Endothelial cell of umbilical vein (primary cell): ENCODE measurements at regions of chr16 and their contacts with region 1.

Region 1: GRCh38 chr16:58121132-58121531 is 8.0 kb downstream of the CFAP20 start:
- DNase-seq: peak; percentile 56
- H3K4me3 ChIP-seq: no peak overlapping the region
- H3K27ac ChIP-seq: peak overlapping the region; percentile 39
- H3K4me1 ChIP-seq: peaks cover 28% of the 10 kb centered on the region
- H3K27me3 ChIP-seq: no peaks in the 10 kb centered on the region
- CTCF ChIP-seq: no peak
- POLR2A ChIP-seq: no peak

Region 2: GRCh38 chr16:57899771-57900661 is 221.1 kb before region 1 on chr16:
- CTCF ChIA-PET with region 1: interaction called, 13 read pairs
- POLR2A ChIA-PET with region 1: no interaction called
- dilution Hi-C with region 1: no loop called
- intact Hi-C with region 1: loop called (anchors 1 kb)
- DNase-seq: peak; percentile 67
- H3K4me3 ChIP-seq: no peak overlapping the region
- H3K27ac ChIP-seq: no peak overlapping the region
- H3K4me1 ChIP-seq: no peaks in the 10 kb centered on the region
- H3K27me3 ChIP-seq: peaks cover 0 to 3% of the 10 kb centered on the region in 2 experiments
- CTCF ChIP-seq: peak; percentile 85 to 87
- POLR2A ChIP-seq: no peak

Region 3: GRCh38 chr16:57906382-57907316 is 214.5 kb before region 1 on chr16:
- CTCF ChIA-PET with region 1: interaction called, 13 read pairs
- POLR2A ChIA-PET with region 1: no interaction called
- dilution Hi-C with region 1: no loop called
- intact Hi-C with region 1: no loop called
- DNase-seq: peak; percentile 21
- H3K4me3 ChIP-seq: no peak overlapping the region
- H3K27ac ChIP-seq: no peak overlapping the region
- H3K4me1 ChIP-seq: no peaks in the 10 kb centered on the region
- H3K27me3 ChIP-seq: peaks cover 0 to 3% of the 10 kb centered on the region in 2 experiments
- CTCF ChIP-seq: peak; percentile 34 to 61
- POLR2A ChIP-seq: no peak

Region 4: GRCh38 chr16:58018804-58019203 is 102.3 kb before region 1 on chr16:
- CTCF ChIA-PET with region 1: interaction called, 81 read pairs
- POLR2A ChIA-PET with region 1: interaction called, 3 read pairs
- dilution Hi-C with region 1: no loop called
- intact Hi-C with region 1: loop called (anchors 1 kb)
- DNase-seq: no peak
- H3K4me3 ChIP-seq: no peak overlapping the region
- H3K27ac ChIP-seq: no peak overlapping the region
- H3K4me1 ChIP-seq: peaks cover 10% of the 10 kb centered on the region
- H3K27me3 ChIP-seq: no peaks in the 10 kb centered on the region
- CTCF ChIP-seq: no peak
- POLR2A ChIP-seq: no peak

Region 5: DNA sequence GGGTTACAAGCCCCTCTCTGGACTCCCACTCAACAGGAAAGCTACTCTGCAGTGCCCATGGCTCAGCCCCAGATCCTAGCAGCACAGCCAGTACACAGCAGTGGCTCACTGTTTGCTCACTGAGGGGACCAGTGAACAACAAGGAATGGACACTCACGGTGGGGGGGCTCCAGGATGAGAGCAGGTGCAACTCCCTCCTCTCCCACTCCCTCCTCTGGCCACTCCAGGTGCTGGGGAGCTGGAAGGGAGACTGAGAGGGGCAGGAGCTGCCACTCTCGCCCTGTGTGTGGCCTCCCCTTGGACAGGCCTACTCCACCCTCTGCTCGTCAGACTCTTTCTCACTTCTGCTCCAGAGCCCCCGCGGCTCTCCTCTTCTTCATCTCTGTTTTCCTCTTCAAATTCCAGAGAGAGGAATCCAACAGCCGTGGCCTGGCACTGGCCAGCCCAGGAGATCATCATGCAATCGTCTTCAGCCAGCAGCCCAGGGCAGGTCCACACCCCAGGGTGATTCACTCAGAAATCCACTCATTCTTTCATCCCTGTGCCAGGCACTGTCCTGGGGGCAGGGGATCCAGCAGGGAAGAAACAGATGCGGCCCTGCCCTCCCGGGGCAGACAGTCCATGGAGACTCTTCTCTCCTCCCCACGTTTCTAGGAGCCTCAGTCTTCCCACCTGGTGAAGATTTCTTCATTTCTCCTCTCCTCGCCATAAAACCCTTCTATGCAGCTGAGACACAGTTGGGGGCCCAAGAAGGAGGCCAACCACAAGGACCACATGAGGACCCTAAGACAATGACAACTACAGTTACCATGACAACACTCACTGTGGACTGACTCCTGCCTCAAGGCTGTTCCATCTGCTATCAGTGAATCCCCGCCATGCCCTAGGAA is 22.7 kb before region 1 on chr16:
- CTCF ChIA-PET with region 1: interaction called, 11 read pairs
- POLR2A ChIA-PET with region 1: no interaction called
- dilution Hi-C with region 1: no loop called
- intact Hi-C with region 1: no loop called
- DNase-seq: no peak
- H3K4me3 ChIP-seq: no peak overlapping the region
- H3K27ac ChIP-seq: no peak overlapping the region
- H3K4me1 ChIP-seq: no peaks in the 10 kb centered on the region
- H3K27me3 ChIP-seq: no peaks in the 10 kb centered on the region
- CTCF ChIP-seq: no peak
- POLR2A ChIP-seq: no peak